ENCODE measurements at regions of chr14 and their contacts with region 1.

Region 1: DNA sequence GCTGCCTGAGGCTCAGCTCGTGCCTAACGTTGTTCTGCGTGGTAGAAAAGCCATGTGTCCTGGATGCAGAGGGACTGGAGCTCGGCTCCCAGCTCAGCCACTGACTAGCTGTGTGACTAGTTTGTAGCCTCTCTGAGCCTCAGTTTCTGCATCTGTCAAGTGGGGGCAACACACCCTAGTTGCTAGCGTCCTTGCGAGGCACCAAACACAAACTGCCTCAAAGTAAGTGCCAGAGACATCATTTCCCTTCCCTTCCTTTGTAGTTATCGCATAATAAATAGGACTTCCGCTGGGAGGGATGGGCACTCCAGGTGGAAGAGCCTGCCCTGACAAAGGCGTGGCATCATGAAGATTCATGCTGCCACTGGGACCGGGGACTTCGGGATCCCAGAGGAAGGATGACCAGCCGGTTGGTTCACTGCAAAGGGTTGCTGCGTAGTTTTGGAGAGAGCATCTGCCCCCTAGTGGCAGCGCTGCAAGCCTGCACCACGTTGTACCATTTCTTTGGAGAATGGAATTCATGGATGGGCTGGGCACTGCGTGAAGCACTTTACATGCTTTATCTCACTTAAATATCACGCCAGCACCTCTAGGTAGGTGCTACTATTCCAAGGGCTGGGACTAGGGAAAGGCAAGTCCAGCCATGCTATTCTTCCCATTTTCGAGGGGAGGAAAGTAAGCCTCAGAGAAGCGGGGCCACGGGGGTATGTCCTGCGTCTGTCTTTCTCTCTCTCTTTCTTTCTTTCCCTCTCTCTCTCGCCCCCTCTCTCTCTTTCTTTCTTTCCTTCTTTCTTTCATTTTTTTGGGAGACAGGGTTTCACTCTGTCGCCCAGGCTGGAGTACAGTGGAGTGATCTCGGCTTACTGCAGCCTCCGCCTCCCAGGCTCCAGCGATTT is 4.6 kb downstream of the CCDC197 start:
- DNase-seq: no peak
- H3K4me3 ChIP-seq: peak overlapping the region in 1 of 4 donors; percentile 13
- H3K27ac ChIP-seq: peak overlapping the region in 2 of 4 donors; percentile 36 to 58
- H3K4me1 ChIP-seq: peaks cover 7 to 20% (median 16%) of the 10 kb centered on the region in 4 donors
- H3K27me3 ChIP-seq: peaks cover 0 to 3% (median 0%) of the 10 kb centered on the region in 4 donors
- CTCF ChIP-seq: peak in 2 of 3 experiments; percentile 96 to 98
- EP300 ChIP-seq: no peak
- POLR2A ChIP-seq: no peak

Region 2: DNA sequence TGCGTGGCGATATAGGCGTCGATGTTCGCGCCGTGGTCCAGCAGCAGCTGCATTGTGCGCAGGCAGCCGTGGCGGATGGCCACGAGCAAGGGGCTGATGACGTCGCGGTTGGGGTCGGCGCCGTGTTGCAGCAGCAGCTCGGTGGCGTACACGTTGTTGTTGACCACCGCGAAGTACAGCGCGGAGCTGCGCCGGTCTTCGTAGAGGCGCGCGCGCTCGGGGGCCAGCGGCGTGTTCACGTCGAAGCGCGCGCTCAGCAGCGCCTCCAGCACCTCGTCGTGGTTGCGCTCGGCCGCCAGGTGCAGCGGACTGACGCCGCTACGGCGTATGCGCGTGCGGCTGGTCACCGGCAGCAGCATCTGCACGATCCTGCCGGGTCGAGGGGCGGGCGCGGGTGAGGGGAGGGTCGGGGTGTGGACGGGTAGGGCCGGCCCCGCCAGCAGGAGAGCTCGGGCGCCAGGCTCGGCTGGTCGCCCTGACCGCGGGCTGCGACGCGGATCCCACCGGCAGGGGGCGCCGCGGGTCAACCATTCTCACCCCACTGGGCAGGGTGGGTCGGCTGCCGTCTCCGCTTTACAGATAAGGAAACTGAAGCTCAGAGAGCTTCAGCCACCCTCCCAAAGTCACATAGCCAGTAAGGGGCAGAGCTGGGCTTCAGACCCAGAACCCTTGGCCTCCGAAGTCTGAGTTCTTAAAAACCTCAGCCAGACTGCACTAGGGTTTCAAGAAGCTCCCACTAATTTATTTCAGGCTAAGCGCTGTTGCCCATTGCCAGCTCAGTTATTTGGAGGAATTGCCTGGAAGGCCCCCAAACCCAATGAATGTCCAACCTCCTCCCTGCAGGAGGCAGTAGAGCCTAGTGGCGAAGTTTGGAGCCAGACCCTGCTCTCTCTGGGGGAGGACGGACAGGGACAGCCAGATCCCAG is 62.2 kb before region 1 on chr14:
- intact Hi-C with region 1: loop called (anchors 2 kb)
- DNase-seq: peak; percentile 93
- H3K4me3 ChIP-seq: peak overlapping the region; percentile 30 to 55 (median 38)
- H3K27ac ChIP-seq: peak overlapping the region; percentile 80 to 94 (median 88)
- H3K4me1 ChIP-seq: peaks cover 10 to 84% (median 79%) of the 10 kb centered on the region in 4 donors
- H3K27me3 ChIP-seq: peaks cover 0 to 10% (median 0%) of the 10 kb centered on the region in 4 donors
- CTCF ChIP-seq: peak; percentile 79 to 95 (median 88)
- EP300 ChIP-seq: no peak
- POLR2A ChIP-seq: no peak

Measured in esophagus muscularis mucosa (tissue), 4 donors.